ENCODE measurements at regions of chr4 and their contacts with region 1.

Region 1: GRCh38 chr4:6327041-6327917 is 57.6 kb downstream of the WFS1 start:
- DNase-seq: peak; percentile 84
- H3K4me3 Mint-ChIP-seq: no peak overlapping the region
- H3K27ac Mint-ChIP-seq: no peak overlapping the region
- H3K4me1 Mint-ChIP-seq: no peaks in the 10 kb centered on the region
- H3K27me3 Mint-ChIP-seq: no peaks in the 10 kb centered on the region
- CTCF ChIP-seq: peak; percentile 64

Region 2: DNA sequence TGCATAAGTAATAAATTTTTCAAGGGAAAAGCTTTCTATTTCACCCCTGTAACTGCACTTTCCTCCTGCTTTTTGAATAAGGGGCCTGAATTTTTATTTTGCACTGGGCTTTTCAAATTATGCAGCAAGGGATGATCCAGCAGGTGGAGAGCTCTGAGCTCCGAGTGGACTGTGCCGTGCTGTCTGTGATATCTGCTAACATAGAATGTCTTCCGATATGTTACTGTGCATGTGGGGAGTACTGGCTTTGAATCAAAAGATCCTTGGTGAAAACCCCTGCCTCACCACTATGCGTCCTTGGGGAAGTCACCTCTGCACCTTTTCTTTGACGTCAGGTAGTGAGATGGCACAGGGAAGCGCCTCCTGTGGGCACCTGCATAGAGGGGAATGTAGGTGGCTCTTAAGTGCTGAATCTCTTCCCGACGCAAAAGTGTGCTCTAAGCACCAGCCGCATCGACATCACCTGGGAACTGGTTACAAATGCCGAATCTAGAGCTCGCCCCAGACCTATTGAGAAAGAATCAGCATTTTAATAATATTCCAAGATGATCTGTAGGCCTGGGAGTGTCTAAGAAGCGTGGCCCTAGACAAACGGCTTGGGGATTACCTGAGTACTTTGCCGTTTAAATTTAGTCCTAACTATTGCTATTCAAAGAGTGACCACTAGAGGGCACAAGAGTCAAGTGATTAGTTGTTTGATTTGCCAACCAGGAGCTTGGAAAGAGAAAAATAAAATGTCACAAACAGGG is 76.9 kb before region 1 on chr4:
- CTCF ChIA-PET with region 1: interaction called, 26 read pairs
- intact Hi-C with region 1: loop called (anchors 1 kb)
- DNase-seq: peak; percentile 40
- H3K4me3 Mint-ChIP-seq: no peak overlapping the region
- H3K27ac Mint-ChIP-seq: no peak overlapping the region
- H3K4me1 Mint-ChIP-seq: no peaks in the 10 kb centered on the region
- H3K27me3 Mint-ChIP-seq: peaks cover 35% of the 10 kb centered on the region
- CTCF ChIP-seq: peak; percentile 58

Measured in Calu3 (cell line).